ENCODE measurements at regions of chr2 and their contacts with region 1.

Region 1: GRCh38 chr2:231297108-231297908 is 98.2 kb upstream of the B3GNT7 start:
- DNase-seq: peak; percentile 40
- ATAC-seq: peak; percentile 70
- H3K4me3 Mint-ChIP-seq: no peak overlapping the region
- H3K27ac Mint-ChIP-seq: peak overlapping the region; percentile 47
- H3K4me1 Mint-ChIP-seq: peaks cover 57% of the 10 kb centered on the region
- H3K27me3 Mint-ChIP-seq: no peaks in the 10 kb centered on the region
- CTCF ChIP-seq: no peak

Region 2: DNA sequence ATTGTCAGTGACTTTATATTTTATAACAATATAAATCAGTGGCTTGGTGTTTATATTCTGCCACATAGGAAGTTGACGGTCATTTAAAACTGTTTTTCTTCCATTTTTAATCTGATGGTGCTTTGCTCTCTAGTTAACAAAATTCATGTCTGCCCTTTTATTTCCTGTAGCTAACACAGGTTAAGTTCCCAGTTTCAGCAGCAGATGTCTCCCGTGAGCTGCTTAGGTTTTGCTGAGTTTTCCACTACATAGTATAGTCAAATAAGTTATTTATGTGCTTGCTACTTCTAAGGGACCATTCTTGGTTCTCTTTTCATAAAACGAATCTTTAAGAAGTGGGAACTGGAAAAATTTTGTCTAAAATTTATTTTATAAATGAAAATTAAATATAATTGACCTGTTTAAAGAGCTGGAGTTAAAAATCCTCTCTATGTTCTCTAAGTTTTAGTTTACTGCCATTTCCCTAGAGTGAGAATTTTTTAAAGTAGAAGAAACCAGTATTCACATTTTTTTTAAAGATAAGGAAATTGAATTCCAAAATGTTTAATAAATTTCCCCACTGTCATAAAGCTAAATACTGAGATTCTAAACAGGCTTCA is 193.1 kb before region 1 on chr2:
- CTCF ChIA-PET with region 1: interaction called, 5 read pairs
- POLR2A ChIA-PET with region 1: no interaction called
- intact Hi-C with region 1: loop called (anchors 10 kb)
- DNase-seq: peak; percentile 34
- ATAC-seq: peak; percentile 91
- H3K4me3 Mint-ChIP-seq: no peak overlapping the region
- H3K27ac Mint-ChIP-seq: no peak overlapping the region
- H3K4me1 Mint-ChIP-seq: peaks cover 3% of the 10 kb centered on the region
- H3K27me3 Mint-ChIP-seq: no peaks in the 10 kb centered on the region
- CTCF ChIP-seq: no peak

Region 3: DNA sequence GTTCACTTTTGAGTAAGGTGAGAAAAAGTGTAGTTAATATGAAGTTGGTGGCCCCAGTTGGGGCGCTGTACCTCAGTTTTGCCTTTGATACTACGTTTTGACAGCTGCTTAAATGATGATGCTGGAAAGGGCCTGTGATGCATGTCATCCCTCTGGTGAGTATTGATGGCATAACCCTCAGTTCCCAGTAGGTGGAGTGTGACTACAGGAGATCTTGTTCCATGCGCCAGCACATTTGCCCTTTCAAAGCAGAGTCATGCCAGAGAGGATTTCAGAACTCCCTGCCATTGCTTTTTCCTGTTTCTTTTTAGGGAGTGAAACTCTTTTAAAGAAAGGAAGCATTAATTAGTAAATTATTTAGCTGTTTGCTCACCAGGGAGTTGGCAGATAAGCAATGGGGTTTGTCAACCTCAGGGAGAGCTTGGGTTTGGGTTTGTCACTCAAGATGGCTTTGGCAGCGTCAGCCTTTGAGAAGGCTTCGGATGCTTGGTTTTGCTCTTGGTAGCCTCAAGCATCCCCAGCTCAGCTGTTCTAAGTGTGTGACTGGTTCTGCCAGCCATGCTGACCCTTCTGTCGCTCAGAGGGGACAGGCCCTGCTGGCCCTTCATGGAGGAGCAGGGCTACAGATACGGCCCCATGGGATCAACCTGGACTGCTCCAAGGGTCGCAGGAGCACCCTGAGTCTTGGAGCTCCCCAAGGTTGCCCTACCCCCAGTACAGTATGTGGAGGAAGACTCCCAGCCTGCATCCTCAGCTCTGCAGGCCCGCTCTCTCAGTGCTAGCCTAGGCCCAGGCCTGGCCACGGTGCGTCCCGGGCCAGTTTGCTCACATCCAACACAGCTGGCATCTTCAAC is 69.8 kb before region 1 on chr2:
- CTCF ChIA-PET with region 1: interaction called, 10 read pairs
- POLR2A ChIA-PET with region 1: no interaction called
- intact Hi-C with region 1: loop called (anchors 2 kb)
- DNase-seq: no peak
- ATAC-seq: peak; percentile 89
- H3K4me3 Mint-ChIP-seq: no peak overlapping the region
- H3K27ac Mint-ChIP-seq: no peak overlapping the region
- H3K4me1 Mint-ChIP-seq: peaks cover 24% of the 10 kb centered on the region
- H3K27me3 Mint-ChIP-seq: no peaks in the 10 kb centered on the region
- CTCF ChIP-seq: peak; percentile 23

Region 4: GRCh38 chr2:231308631-231309428 is 11.5 kb after region 1 on chr2:
- CTCF ChIA-PET with region 1: interaction called, 3 read pairs
- POLR2A ChIA-PET with region 1: no interaction called
- intact Hi-C with region 1: loop called (anchors 1 kb)
- DNase-seq: no peak
- ATAC-seq: no peak
- H3K4me3 Mint-ChIP-seq: no peak overlapping the region
- H3K27ac Mint-ChIP-seq: no peak overlapping the region
- H3K4me1 Mint-ChIP-seq: peaks cover 32% of the 10 kb centered on the region
- H3K27me3 Mint-ChIP-seq: no peaks in the 10 kb centered on the region
- CTCF ChIP-seq: no peak

Region 5: DNA sequence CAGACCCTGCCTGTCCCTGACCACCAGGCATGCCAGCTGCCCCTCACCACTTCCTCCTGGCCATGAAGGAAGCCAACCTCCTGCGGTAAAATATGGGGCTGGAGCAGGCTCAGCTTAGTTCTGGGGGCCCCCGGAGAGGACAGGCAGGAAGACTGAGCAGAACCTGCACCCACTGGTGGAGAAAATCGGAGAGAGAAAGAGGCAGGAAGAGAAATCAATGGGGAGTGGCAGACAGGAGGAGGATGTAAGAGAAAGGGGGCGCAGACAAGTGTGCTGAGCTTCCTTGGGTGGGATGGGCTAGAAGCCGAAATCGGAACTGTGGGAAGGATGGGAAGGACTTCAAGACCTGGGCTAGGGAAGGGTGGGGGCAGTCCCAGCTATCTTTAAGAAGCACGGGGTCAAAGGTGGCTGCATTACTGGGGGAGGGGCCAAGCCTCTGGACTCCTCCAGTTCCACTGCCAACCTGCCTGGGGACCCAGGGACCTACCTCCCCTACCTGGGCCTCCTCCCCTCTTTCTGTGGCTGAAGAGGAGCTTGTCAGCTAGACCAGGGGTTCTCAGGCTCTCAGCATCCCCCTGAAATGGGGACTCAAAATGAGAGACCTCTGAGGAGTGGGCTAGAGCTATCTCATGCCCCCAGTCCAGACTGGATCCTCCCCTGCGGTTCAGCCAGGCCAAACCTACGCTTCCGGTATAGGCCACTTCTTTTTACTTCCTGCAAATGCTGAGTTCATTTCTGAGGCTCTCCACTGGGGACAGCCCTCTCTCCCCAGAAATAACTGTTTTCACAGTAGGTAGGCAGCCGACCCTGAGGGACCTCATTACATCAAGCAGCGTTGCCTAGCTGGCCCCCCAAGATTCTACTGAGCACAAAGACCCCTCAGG is 64.6 kb after region 1 on chr2:
- CTCF ChIA-PET with region 1: interaction called, 6 read pairs
- POLR2A ChIA-PET with region 1: no interaction called
- intact Hi-C with region 1: loop called (anchors 1 kb)
- DNase-seq: peak; percentile 20
- ATAC-seq: peak; percentile 90
- H3K4me3 Mint-ChIP-seq: peak overlapping the region; percentile 32
- H3K27ac Mint-ChIP-seq: peak overlapping the region; percentile 59
- H3K4me1 Mint-ChIP-seq: peaks cover 28% of the 10 kb centered on the region
- H3K27me3 Mint-ChIP-seq: no peaks in the 10 kb centered on the region
- CTCF ChIP-seq: no peak

Region 6: GRCh38 chr2:231411831-231412617 is 114.7 kb after region 1 on chr2:
- CTCF ChIA-PET with region 1: interaction called, 79 read pairs
- POLR2A ChIA-PET with region 1: interaction called, 3 read pairs
- intact Hi-C with region 1: loop called (anchors 1 kb)
- DNase-seq: peak; percentile 86
- ATAC-seq: peak; percentile 100
- H3K4me3 Mint-ChIP-seq: peak overlapping the region; percentile 56
- H3K27ac Mint-ChIP-seq: no peak overlapping the region
- H3K4me1 Mint-ChIP-seq: peaks cover 9% of the 10 kb centered on the region
- H3K27me3 Mint-ChIP-seq: peaks cover 13% of the 10 kb centered on the region
- CTCF ChIP-seq: no peak

Region 7: DNA sequence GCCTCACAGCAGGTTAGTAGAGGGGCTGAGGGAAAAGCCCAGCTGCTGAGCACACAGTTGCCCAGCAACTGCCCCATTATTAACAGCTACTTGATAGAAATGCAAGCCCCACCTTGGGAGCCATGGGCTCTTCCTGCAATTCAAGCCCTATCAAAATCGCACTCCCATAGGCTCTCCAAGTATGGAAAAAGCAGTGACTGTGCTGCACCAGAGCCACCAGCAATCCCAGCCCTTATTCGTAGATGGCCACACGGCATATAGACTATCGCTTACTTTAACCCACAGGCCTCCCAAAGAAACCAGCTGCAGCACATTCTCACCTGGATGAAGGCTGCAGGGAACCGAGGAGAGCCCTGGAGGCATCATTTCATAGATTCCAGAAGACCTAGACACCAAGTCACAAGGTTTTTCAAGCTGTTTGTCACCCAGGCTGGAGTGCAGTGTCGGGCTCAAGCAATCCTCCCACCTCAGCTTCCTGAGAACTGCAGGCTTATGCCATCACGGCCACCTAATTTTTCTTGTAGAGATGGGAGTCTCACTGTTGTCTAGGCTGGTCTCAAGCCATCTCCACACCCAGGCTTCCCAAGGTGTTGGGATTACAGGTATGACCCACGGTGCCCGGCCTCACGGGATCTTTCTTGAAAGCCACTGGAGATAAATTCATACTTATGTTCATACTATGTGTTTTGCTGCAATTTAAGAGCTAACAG is 155.6 kb after region 1 on chr2:
- CTCF ChIA-PET with region 1: no interaction called
- POLR2A ChIA-PET with region 1: no interaction called
- intact Hi-C with region 1: loop called (anchors 2 kb)
- DNase-seq: no peak
- ATAC-seq: no peak
- H3K4me3 Mint-ChIP-seq: no peak overlapping the region
- H3K27ac Mint-ChIP-seq: no peak overlapping the region
- H3K4me1 Mint-ChIP-seq: peaks cover 7% of the 10 kb centered on the region
- H3K27me3 Mint-ChIP-seq: no peaks in the 10 kb centered on the region
- CTCF ChIP-seq: no peak